K562 (cell line): ENCODE measurements at regions of chr2 and their contacts with region 1.

Region 1: GRCh38 chr2:62705007-62705829 is at the start of gene EHBP1:
- DNase-seq: peak; percentile 99 to 100 (median 100)
- ATAC-seq: peak; percentile 96
- H3K4me3 ChIP-seq: peak within 1 kb of the TSS; percentile 57
- H3K27ac ChIP-seq: peak within 1 kb of the TSS; percentile 69
- H3K4me1 ChIP-seq: peaks cover 0 to 20% of the 10 kb centered on the region in 2 experiments; a peak in 2 of 5 replicates
- H3K27me3 ChIP-seq: no peaks in the 10 kb centered on the region
- CTCF ChIP-seq: no peak
- EP300 ChIP-seq: peak; percentile 7; the same call in 1 of the 2 replicates
- POLR2A ChIP-seq: peak; percentile 81
- RAD21 ChIP-seq: 0 out of 4 replicates have a peak, but pooled peaks of 1 of the 2 experiments have one; percentile 11
- polyA plus RNA-seq, gene EHBP1: 8.9 to 9.6 TPM

Region 2: GRCh38 chr2:62505750-62506420 is 199.3 kb before region 1 on chr2 and contains the start of gene TMEM17:
- CTCF ChIA-PET with region 1: no interaction called
- POLR2A ChIA-PET with region 1: interaction called, 4 read pairs
- in situ Hi-C with region 1: no loop called
- intact Hi-C with region 1: loop called (anchors 5 kb)
- DNase-seq: peak; percentile 83 to 95 (median 86)
- ATAC-seq: peak; percentile 95
- H3K4me3 ChIP-seq: peak within 1 kb of the TSS; percentile 64
- H3K27ac ChIP-seq: peak within 1 kb of the TSS; percentile 93
- H3K4me1 ChIP-seq: peaks cover 10 to 14% of the 10 kb centered on the region in 2 experiments
- H3K27me3 ChIP-seq: no peaks in the 10 kb centered on the region
- CTCF ChIP-seq: no peak
- EP300 ChIP-seq: no peak
- POLR2A ChIP-seq: peak; percentile 73; the same call in 1 of the 2 replicates
- RAD21 ChIP-seq: 0 out of 4 replicates have a peak, but pooled peaks of 1 of the 2 experiments have one; percentile 6
- polyA plus RNA-seq, gene TMEM17: 0.74 to 1.6 TPM

Region 3: GRCh38 chr2:62774555-62775366 is 69.5 kb after region 1 on chr2:
- CTCF ChIA-PET with region 1: no interaction called
- POLR2A ChIA-PET with region 1: no interaction called
- in situ Hi-C with region 1: no loop called
- intact Hi-C with region 1: loop called (anchors 1 kb)
- DNase-seq: peak; percentile 18 to 63 (median 22)
- ATAC-seq: peak; percentile 96
- H3K4me3 ChIP-seq: no peak overlapping the region
- H3K27ac ChIP-seq: peak overlapping the region; percentile 19; the same call in 1 of the 3 replicates
- H3K4me1 ChIP-seq: peaks cover 0 to 3% of the 10 kb centered on the region in 2 experiments; a peak in 1 of 5 replicates
- H3K27me3 ChIP-seq: no peaks in the 10 kb centered on the region
- CTCF ChIP-seq: peak; percentile 41 to 76 (median 49); a peak in 3 of 6 replicates
- EP300 ChIP-seq: no peak
- POLR2A ChIP-seq: no peak
- RAD21 ChIP-seq: peak; percentile 86 to 93